Activated CD8-positive, alpha-beta T cell treated with anti-CD3 and anti-CD28 coated beads for 36 hours (primary cell): ENCODE measurements at regions of chr5 and their contacts with region 1.

Region 1: DNA sequence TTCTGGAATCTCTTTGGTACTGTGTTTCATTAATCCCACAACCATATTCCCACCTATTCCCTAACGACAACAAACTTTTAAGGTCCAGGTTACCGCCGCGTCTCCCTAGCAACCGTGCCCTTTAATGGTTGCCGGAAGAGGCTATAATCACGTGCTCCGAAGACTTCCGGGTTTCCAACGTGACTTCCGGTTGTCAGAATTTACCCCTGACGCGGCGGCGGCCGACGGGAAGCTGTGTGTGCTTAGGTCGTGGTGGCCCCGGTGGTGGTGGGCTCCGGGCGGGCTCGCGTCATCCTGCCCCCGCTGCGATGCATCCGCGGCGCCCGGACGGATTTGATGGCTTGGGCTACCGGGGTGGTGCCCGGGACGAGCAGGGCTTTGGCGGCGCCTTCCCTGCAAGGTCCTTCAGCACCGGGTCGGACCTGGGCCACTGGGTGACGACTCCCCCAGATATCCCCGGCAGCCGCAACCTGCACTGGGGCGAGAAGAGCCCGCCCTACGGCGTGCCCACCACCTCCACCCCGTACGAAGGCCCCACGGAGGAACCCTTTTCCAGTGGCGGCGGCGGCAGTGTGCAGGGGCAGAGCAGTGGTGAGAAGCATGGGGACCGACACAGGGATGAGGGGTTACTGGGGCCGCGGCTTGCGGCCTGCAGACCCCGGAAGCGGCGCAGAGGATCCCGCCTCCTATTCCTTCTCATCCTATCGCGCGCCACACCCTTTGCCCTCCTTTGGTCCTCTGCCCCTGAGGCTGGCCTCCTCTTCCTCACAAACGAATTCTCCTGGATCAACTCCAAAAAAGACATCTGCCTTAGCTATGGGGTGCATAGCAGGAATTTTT is at the start of gene SLC25A46:
- DNase-seq: peak; percentile 94
- ATAC-seq: peak; percentile 88
- H3K4me3 Mint-ChIP-seq: peak within 1 kb of the TSS; percentile 96
- H3K27ac Mint-ChIP-seq: peak within 1 kb of the TSS; percentile 94
- H3K4me1 Mint-ChIP-seq: peaks cover 23% of the 10 kb centered on the region
- H3K27me3 Mint-ChIP-seq: peaks cover 3% of the 10 kb centered on the region
- CTCF ChIP-seq: no peak
- total RNA-seq, gene SLC25A46: 35.2 to 38.8 TPM

Region 2: DNA sequence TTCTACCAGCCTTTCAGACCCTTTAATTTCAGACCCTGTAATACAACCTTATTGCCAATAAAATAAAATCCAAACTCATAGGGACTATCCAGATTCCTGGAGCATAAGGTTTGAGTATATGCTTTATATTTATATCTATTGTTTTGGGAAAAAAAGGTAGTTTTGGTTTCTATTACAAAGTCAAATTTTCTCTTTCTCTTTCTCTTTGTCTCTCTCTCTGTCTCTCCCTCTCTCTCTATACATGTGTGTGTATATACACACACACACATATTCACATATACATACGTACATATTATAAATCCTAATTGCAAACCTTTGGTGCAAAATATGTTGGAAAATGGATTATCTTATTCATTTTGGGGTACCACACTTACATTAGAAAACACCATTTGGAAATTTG is 51.5 kb before region 1 on chr5:
- CTCF ChIA-PET with region 1: no interaction called
- POLR2A ChIA-PET with region 1: no interaction called
- intact Hi-C with region 1: no loop called
- DNase-seq: no peak
- ATAC-seq: no peak
- H3K4me3 Mint-ChIP-seq: no peak overlapping the region
- H3K27ac Mint-ChIP-seq: no peak overlapping the region
- H3K4me1 Mint-ChIP-seq: no peaks in the 10 kb centered on the region
- H3K27me3 Mint-ChIP-seq: no peaks in the 10 kb centered on the region
- CTCF ChIP-seq: no peak

Region 3: GRCh38 chr5:110757118-110757729 is 18.2 kb after region 1 on chr5:
- CTCF ChIA-PET with region 1: interaction called, 19 read pairs
- POLR2A ChIA-PET with region 1: no interaction called
- intact Hi-C with region 1: no loop called
- DNase-seq: peak; percentile 15
- ATAC-seq: peak; percentile 24
- H3K4me3 Mint-ChIP-seq: no peak overlapping the region
- H3K27ac Mint-ChIP-seq: no peak overlapping the region
- H3K4me1 Mint-ChIP-seq: peaks cover 26% of the 10 kb centered on the region
- H3K27me3 Mint-ChIP-seq: no peaks in the 10 kb centered on the region
- CTCF ChIP-seq: peak; percentile 82

Region 4: GRCh38 chr5:110940136-110940535 is 201.1 kb after region 1 on chr5:
- CTCF ChIA-PET with region 1: no interaction called
- POLR2A ChIA-PET with region 1: no interaction called
- intact Hi-C with region 1: no loop called
- DNase-seq: no peak
- ATAC-seq: no peak
- H3K4me3 Mint-ChIP-seq: no peak overlapping the region
- H3K27ac Mint-ChIP-seq: no peak overlapping the region
- H3K4me1 Mint-ChIP-seq: no peaks in the 10 kb centered on the region
- H3K27me3 Mint-ChIP-seq: peaks cover 3% of the 10 kb centered on the region
- CTCF ChIP-seq: no peak